AG04450 (cell line): ENCODE measurements at regions of chr2 and their contacts with region 1.

Region 1: DNA sequence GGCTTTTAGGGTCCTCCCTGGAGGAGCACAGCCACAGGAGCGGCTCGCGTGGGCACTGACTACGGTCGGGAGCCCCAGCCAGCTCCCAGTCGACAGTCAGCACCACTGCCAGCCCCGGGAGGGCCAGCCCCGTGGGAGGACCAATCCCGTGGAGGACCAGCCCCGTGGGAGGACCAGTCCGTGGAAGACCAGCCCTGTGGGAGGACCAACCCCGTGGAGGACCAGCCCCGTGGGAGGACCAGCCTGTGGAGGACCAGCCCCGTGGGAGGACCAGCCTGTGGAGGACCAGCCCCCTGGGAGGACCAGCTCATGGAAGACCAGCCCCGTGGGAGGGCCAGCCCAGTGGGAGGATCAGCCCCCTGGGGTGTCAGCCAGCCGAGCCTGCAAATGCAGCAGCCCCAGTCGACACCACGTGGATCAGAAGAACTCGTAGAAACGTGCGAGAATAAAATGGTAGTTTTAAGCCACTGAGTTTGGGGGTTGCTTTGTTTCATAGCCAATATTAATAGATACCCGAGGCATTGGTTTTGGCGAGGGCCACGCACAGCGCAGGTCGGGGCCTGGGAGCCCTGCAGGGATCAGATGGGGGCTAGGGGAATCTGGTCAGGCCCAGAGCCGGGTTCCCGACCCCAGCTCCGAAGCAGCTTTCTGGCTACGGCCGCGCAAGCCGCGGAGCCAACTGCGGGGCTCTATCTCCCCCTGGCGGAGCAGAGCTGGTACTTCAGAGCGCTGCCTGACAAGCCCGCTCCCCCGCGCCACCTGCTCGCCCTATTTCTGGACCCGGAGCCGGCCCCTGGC is 73.0 kb downstream of the TEX51 start:
- DNase-seq: peak; percentile 21
- H3K4me3 ChIP-seq: peak overlapping the region; percentile 48
- H3K27ac ChIP-seq: no peak overlapping the region
- H3K27me3 ChIP-seq: peaks cover 16% of the 10 kb centered on the region
- CTCF ChIP-seq: peak; percentile 90

Region 2: DNA sequence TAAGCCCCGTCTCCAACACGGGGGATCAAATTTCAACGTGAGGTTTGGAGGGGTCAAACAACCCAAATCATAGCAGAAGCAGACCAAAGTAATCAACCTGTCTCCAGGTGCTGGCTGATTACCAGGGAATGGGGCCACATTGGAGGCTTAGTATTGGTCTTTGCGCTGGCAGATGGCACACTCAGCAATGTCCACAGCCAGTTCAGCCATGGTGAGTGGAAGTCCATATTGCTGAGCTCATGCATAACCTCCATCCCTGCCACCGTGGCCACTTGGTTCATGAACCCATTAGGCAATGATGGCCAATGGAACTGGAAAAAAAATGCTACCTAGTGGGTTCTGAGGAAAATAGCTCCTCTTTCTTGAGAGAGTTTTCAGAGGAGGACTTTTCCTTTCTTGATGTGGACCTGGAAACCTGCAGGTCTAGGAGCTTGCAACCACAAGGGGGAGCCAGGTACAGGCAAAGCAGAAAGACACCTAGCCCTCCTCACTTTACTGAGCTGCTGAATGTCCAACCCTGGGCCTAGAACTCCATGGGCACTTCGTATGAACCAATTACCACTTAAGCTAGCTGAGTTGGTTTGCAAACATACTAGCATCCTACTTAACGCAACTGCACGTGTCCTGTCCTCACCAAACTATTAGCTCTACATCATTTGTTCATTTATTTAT is 443.7 kb before region 1 on chr2:
- CTCF ChIA-PET with region 1: interaction called, 13 read pairs
- POLR2A ChIA-PET with region 1: no interaction called
- DNase-seq: peak; percentile 13
- H3K4me3 ChIP-seq: no peak overlapping the region
- H3K27ac ChIP-seq: no peak overlapping the region
- H3K27me3 ChIP-seq: no peaks in the 10 kb centered on the region
- CTCF ChIP-seq: peak; percentile 65

Region 3: DNA sequence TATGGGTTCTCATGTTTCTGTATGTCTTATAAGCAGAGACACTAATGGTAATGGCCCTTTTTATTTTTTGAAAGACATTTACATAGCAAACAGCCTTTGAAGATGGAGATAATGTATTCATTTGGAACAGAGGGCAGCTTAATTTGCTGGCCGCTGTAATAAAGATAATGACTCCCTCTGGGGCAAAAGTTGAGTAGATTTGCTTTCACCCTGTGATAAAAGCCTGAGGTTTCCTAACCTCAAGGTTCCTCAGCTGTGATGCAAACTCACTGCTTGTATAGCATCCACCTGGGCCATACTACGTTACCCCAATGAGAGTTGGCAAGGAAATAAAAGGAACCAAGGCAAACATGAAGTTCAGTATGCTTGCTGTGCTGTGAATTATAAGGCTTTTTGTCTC is 18.2 kb before region 1 on chr2:
- CTCF ChIA-PET with region 1: interaction called, 17 read pairs
- POLR2A ChIA-PET with region 1: no interaction called
- DNase-seq: no peak
- H3K4me3 ChIP-seq: no peak overlapping the region
- H3K27ac ChIP-seq: no peak overlapping the region
- H3K27me3 ChIP-seq: no peaks in the 10 kb centered on the region
- CTCF ChIP-seq: no peak

Region 4: GRCh38 chr2:126994340-126994777 is 22.7 kb after region 1 on chr2:
- CTCF ChIA-PET with region 1: interaction called, 16 read pairs
- POLR2A ChIA-PET with region 1: no interaction called
- DNase-seq: no peak
- H3K4me3 ChIP-seq: no peak overlapping the region
- H3K27ac ChIP-seq: no peak overlapping the region
- H3K27me3 ChIP-seq: peaks cover 13% of the 10 kb centered on the region
- CTCF ChIP-seq: no peak

Region 5: GRCh38 chr2:127000937-127001336 is 29.3 kb after region 1 on chr2:
- CTCF ChIA-PET with region 1: interaction called, 12 read pairs
- POLR2A ChIA-PET with region 1: no interaction called
- DNase-seq: no peak
- H3K4me3 ChIP-seq: no peak overlapping the region
- H3K27ac ChIP-seq: no peak overlapping the region
- H3K27me3 ChIP-seq: peaks cover 5% of the 10 kb centered on the region
- CTCF ChIP-seq: no peak